Activated naive CD4-positive, alpha-beta T cell treated with anti-CD3 and anti-CD28 coated beads for 36 hours (primary cell): ENCODE measurements at regions of chr2 and their contacts with region 1.

Region 1: GRCh38 chr2:159286709-159287441 is 372 bp upstream of the WDSUB1 start:
- DNase-seq: peak; percentile 97
- H3K4me3 Mint-ChIP-seq: peak overlapping the region; percentile 87
- H3K27ac Mint-ChIP-seq: peak overlapping the region; percentile 75
- H3K4me1 Mint-ChIP-seq: peaks cover 26% of the 10 kb centered on the region
- H3K27me3 Mint-ChIP-seq: no peaks in the 10 kb centered on the region

Region 2: DNA sequence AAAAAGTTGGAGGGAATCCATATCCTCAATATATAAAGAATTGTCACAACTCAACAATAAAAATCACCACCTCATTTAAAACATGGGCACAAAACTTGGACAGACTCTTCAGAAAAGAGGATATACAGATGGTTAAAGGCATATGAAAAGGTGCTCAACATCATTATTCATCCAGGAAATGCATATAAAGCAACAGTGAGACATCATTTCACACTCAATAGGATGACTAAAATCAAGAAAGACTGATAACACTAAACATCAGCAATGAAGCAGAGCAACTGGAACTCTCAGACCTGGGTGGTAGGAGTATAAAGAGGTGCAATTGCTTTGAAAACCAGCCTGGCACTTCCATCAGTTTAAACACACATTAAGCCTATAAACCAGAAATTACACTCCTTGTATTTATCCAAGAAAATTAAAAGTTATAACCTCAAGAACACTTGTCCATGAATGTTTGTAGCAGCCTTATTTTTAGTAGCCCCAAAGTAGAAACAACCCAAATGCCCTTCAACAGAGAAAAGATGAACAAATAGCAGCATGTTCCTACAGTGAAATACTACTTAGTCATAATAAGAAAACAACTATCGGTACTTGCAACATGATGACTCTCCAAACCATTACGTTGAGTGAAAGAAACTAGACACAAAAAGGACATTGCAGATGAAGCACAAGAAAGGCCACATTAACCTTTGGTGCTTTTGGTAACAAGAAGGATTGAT is 397.6 kb before region 1 on chr2:
- CTCF ChIA-PET with region 1: no interaction called
- intact Hi-C with region 1: loop called (anchors 5 kb)
- DNase-seq: peak; percentile 12
- H3K4me3 Mint-ChIP-seq: no peak overlapping the region
- H3K27ac Mint-ChIP-seq: peak overlapping the region; percentile 21
- H3K4me1 Mint-ChIP-seq: peaks cover 19% of the 10 kb centered on the region
- H3K27me3 Mint-ChIP-seq: peaks cover 6% of the 10 kb centered on the region

Region 3: GRCh38 chr2:158968396-158969161 is 318.3 kb before region 1 on chr2 and contains the start of gene TANC1:
- CTCF ChIA-PET with region 1: no interaction called
- intact Hi-C with region 1: loop called (anchors 2 kb)
- DNase-seq: peak; percentile 85
- H3K4me3 Mint-ChIP-seq: peak within 1 kb of the TSS; percentile 80
- H3K27ac Mint-ChIP-seq: no peak within 1 kb of the TSS
- H3K4me1 Mint-ChIP-seq: peaks cover 14% of the 10 kb centered on the region
- H3K27me3 Mint-ChIP-seq: peaks cover 50% of the 10 kb centered on the region
- total RNA-seq, gene TANC1: 2.0 to 2.3 TPM

Region 4: GRCh38 chr2:159516241-159516766 is 229.4 kb after region 1 on chr2:
- CTCF ChIA-PET with region 1: no interaction called
- intact Hi-C with region 1: loop called (anchors 2 kb)
- DNase-seq: peak; percentile 23
- H3K4me3 Mint-ChIP-seq: peak overlapping the region; percentile 66
- H3K27ac Mint-ChIP-seq: peak overlapping the region; percentile 54
- H3K4me1 Mint-ChIP-seq: peaks cover 17% of the 10 kb centered on the region
- H3K27me3 Mint-ChIP-seq: no peaks in the 10 kb centered on the region

Region 5: GRCh38 chr2:159738509-159739390 is 451.9 kb after region 1 on chr2:
- CTCF ChIA-PET with region 1: no interaction called
- intact Hi-C with region 1: no loop called
- DNase-seq: no peak
- H3K4me3 Mint-ChIP-seq: no peak overlapping the region
- H3K27ac Mint-ChIP-seq: no peak overlapping the region
- H3K4me1 Mint-ChIP-seq: peaks cover 31% of the 10 kb centered on the region
- H3K27me3 Mint-ChIP-seq: no peaks in the 10 kb centered on the region

Region 6: GRCh38 chr2:159904127-159904958 is 617.5 kb after region 1 on chr2:
- CTCF ChIA-PET with region 1: no interaction called
- intact Hi-C with region 1: loop called (anchors 1 kb)
- DNase-seq: peak; percentile 82
- H3K4me3 Mint-ChIP-seq: peak within 1 kb of the TSS; percentile 93
- H3K27ac Mint-ChIP-seq: peak within 1 kb of the TSS; percentile 93
- H3K4me1 Mint-ChIP-seq: peaks cover 58% of the 10 kb centered on the region
- H3K27me3 Mint-ChIP-seq: no peaks in the 10 kb centered on the region

Region 7: GRCh38 chr2:159960383-159960782 is 673.5 kb after region 1 on chr2:
- CTCF ChIA-PET with region 1: no interaction called
- intact Hi-C with region 1: loop called (anchors 2 kb)
- DNase-seq: no peak
- H3K4me3 Mint-ChIP-seq: no peak overlapping the region
- H3K27ac Mint-ChIP-seq: no peak overlapping the region
- H3K4me1 Mint-ChIP-seq: peaks cover 18% of the 10 kb centered on the region
- H3K27me3 Mint-ChIP-seq: peaks cover 4% of the 10 kb centered on the region